BJ (cell line): ENCODE measurements at regions of chr6 and their contacts with region 1.

Region 1: GRCh38 chr6:74851596-74851995 is 354.3 kb downstream of the COL12A1 start:
- DNase-seq: peak; percentile 32
- H3K4me3 ChIP-seq: no peak overlapping the region
- H3K27me3 ChIP-seq: no peaks in the 10 kb centered on the region
- CTCF ChIP-seq: no peak

Region 2: DNA sequence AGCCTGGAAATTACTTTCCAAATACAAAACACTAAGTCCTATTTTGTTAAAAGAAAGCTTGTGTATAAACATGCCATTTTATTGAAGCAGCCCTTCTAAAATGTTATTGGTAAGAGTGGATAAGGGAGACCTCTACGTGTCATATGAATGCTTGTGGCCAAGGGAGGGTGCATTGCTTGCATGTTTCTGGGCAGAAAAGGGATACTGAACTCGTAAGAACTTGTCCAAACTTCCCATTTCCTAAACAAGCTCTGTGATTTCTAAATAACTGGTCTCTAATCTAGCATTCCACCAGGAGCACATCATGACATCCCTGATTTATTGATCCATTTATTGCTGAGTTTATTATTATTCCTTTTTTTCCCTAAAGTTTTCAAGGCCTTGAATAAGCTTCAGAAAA is 681.5 kb before region 1 on chr6:
- CTCF ChIA-PET with region 1: no interaction called
- POLR2A ChIA-PET with region 1: no interaction called
- DNase-seq: peak; percentile 84
- H3K4me3 ChIP-seq: no peak overlapping the region
- H3K27me3 ChIP-seq: no peaks in the 10 kb centered on the region
- CTCF ChIP-seq: no peak

Region 3: DNA sequence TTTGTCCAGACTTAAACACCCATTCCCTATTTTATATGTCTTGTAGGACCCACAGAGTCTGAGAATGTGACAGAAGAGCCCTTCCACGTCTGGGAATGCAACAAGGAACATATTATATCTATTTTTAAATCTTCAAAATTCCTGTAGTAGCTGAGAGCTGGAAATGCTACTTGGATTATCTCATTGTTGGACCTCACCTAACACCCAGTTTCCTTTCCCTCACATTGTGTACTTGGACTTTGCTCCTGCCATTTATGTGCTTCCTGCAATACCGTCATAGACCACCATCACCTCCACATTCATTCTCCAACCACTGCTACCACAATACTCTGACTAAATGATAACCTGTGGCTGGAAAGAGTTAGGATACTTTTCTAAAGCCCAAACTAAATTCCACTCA is 18.8 kb after region 1 on chr6:
- CTCF ChIA-PET with region 1: no interaction called
- POLR2A ChIA-PET with region 1: interaction called, 20 read pairs
- DNase-seq: peak; percentile 65
- H3K4me3 ChIP-seq: no peak overlapping the region
- H3K27me3 ChIP-seq: no peaks in the 10 kb centered on the region
- CTCF ChIP-seq: 0 out of 2 replicates have a peak, but pooled peaks have one; percentile 1

Region 4: GRCh38 chr6:74891349-74891831 is 39.8 kb after region 1 on chr6:
- CTCF ChIA-PET with region 1: no interaction called
- POLR2A ChIA-PET with region 1: no interaction called
- DNase-seq: peak; percentile 64
- H3K4me3 ChIP-seq: no peak overlapping the region
- H3K27me3 ChIP-seq: no peaks in the 10 kb centered on the region
- CTCF ChIP-seq: no peak